Activated CD4-positive, alpha-beta T cell treated with anti-CD3 and anti-CD28 coated beads for 36 hours (primary cell): ENCODE measurements at regions of chr11 and their contacts with region 1.

Region 1: GRCh38 chr11:118791111-118791965 is at the start of gene DDX6:
- DNase-seq: peak; percentile 96
- ATAC-seq: peak; percentile 47
- H3K4me3 Mint-ChIP-seq: peak within 1 kb of the TSS; percentile 87
- H3K27ac Mint-ChIP-seq: peak within 1 kb of the TSS; percentile 93
- H3K4me1 Mint-ChIP-seq: peaks cover 26% of the 10 kb centered on the region
- H3K27me3 Mint-ChIP-seq: no peaks in the 10 kb centered on the region
- total RNA-seq, gene DDX6: 175 to 178 TPM

Region 2: DNA sequence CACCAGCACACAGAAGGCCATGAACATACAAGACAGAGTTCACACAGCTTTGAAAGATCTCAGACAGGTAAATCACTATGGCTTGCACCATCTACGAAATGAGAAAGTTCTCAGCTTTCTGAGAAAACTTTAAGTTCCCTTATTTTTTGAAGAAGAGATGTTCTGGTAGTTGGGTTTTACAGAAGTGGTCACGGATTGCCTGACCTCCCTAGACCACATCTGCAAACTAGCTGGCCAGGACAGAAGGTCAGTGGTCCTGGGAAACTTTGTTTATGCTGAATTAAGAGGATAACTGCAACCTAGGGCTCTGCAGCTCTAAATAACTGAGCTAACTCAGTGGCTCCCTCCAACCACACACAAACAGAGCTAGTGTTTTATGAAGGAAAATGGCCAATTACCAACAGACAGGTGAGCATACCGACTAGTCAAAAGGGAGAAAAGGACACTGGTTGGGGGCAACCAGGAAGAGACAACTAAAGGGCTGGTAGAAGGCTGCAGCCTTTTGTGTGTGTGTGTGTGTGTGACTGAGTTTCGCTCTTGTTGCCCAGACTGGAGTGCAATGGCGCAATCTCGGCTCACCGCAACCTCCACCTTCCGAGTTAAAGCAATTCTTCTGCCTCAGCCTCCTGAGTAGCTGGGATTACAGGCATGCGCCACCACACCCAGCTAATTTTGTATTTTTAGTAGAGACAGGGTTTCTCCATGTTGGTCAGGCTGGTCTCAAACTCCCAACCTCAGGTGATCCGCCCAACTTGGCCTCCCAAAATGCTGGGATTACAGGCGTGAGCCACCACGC is 606.4 kb before region 1 on chr11:
- CTCF ChIA-PET with region 1: no interaction called
- POLR2A ChIA-PET with region 1: no interaction called
- intact Hi-C with region 1: no loop called
- DNase-seq: no peak
- ATAC-seq: no peak
- H3K4me3 Mint-ChIP-seq: no peak overlapping the region
- H3K27ac Mint-ChIP-seq: no peak overlapping the region
- H3K4me1 Mint-ChIP-seq: peaks cover under 1% of the 10 kb centered on the region
- H3K27me3 Mint-ChIP-seq: peaks cover 15% of the 10 kb centered on the region

Region 3: DNA sequence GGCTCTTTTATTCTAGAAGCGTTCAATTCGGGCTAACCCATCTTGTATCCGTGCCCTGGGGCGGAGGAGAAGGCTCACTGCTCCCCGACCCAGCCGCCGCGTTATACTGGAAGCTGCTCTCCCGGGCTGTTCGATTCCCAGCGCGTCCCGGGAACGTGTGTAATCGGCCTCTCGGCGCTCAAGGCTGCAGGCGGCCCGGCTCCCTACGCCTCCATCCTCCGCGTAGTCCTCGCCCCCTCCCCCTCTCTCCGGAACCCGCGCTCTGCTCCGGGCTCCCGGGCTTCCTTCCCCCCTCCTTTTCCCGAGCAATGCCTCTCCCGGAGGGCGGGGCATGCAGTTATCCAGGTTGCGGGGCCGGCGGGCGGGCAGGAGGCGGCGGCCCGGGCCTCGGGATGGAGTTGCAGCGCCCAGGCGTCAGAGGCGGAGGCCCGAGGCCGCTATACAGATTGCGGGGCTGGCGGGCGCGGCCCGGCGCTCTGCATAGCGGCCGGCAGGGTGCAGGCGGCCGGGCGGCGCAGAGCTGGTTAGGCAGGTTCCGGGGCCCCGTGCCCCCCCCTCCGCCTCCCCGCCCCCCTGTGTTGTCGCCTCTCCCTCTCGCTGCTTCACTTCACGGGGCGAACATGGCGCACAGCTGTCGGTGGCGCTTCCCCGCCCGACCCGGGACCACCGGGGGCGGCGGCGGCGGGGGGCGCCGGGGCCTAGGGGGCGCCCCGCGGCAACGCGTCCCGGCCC is 355.3 kb before region 1 on chr11 and contains the start of gene KMT2A:
- CTCF ChIA-PET with region 1: no interaction called
- POLR2A ChIA-PET with region 1: no interaction called
- intact Hi-C with region 1: loop called in 1 of 2 experiments (anchors 5 kb)
- DNase-seq: peak; percentile 96
- ATAC-seq: peak; percentile 41
- H3K4me3 Mint-ChIP-seq: peak within 1 kb of the TSS; percentile 94
- H3K27ac Mint-ChIP-seq: peak within 1 kb of the TSS; percentile 94
- H3K4me1 Mint-ChIP-seq: peaks cover 37% of the 10 kb centered on the region
- H3K27me3 Mint-ChIP-seq: no peaks in the 10 kb centered on the region
- total RNA-seq, gene KMT2A: 64.1 to 67.1 TPM

Region 4: GRCh38 chr11:118845369-118845768 is 54.0 kb after region 1 on chr11:
- CTCF ChIA-PET with region 1: interaction called, 7 read pairs
- POLR2A ChIA-PET with region 1: interaction called, 6 read pairs
- intact Hi-C with region 1: loop called in 1 of 2 experiments (anchors 1 kb)
- DNase-seq: peak; percentile 55
- ATAC-seq: peak; percentile 70
- H3K4me3 Mint-ChIP-seq: peak overlapping the region; percentile 5
- H3K27ac Mint-ChIP-seq: peak overlapping the region; percentile 68
- H3K4me1 Mint-ChIP-seq: peaks cover 47% of the 10 kb centered on the region
- H3K27me3 Mint-ChIP-seq: no peaks in the 10 kb centered on the region

Region 5: GRCh38 chr11:118883368-118884071 is 92.2 kb after region 1 on chr11 and contains the start of gene CXCR5:
- CTCF ChIA-PET with region 1: interaction called, 22 read pairs
- POLR2A ChIA-PET with region 1: interaction called, 62 read pairs
- intact Hi-C with region 1: loop called (anchors 1 to 2 kb)
- DNase-seq: peak; percentile 80
- ATAC-seq: peak; percentile 68
- H3K4me3 Mint-ChIP-seq: peak within 1 kb of the TSS; percentile 75
- H3K27ac Mint-ChIP-seq: peak within 1 kb of the TSS; percentile 90
- H3K4me1 Mint-ChIP-seq: peaks cover 80% of the 10 kb centered on the region
- H3K27me3 Mint-ChIP-seq: no peaks in the 10 kb centered on the region
- total RNA-seq, gene CXCR5: 18.9 to 21.3 TPM

Region 6: GRCh38 chr11:118928108-118928870 is 137.0 kb after region 1 on chr11:
- CTCF ChIA-PET with region 1: interaction called, 9 read pairs
- POLR2A ChIA-PET with region 1: interaction called, 6 read pairs
- intact Hi-C with region 1: loop called (anchors 1 to 2 kb)
- DNase-seq: peak; percentile 95
- ATAC-seq: peak; percentile 51
- H3K4me3 Mint-ChIP-seq: peak overlapping the region; percentile 86
- H3K27ac Mint-ChIP-seq: peak overlapping the region; percentile 97
- H3K4me1 Mint-ChIP-seq: peaks cover 42% of the 10 kb centered on the region
- H3K27me3 Mint-ChIP-seq: no peaks in the 10 kb centered on the region

Region 7: DNA sequence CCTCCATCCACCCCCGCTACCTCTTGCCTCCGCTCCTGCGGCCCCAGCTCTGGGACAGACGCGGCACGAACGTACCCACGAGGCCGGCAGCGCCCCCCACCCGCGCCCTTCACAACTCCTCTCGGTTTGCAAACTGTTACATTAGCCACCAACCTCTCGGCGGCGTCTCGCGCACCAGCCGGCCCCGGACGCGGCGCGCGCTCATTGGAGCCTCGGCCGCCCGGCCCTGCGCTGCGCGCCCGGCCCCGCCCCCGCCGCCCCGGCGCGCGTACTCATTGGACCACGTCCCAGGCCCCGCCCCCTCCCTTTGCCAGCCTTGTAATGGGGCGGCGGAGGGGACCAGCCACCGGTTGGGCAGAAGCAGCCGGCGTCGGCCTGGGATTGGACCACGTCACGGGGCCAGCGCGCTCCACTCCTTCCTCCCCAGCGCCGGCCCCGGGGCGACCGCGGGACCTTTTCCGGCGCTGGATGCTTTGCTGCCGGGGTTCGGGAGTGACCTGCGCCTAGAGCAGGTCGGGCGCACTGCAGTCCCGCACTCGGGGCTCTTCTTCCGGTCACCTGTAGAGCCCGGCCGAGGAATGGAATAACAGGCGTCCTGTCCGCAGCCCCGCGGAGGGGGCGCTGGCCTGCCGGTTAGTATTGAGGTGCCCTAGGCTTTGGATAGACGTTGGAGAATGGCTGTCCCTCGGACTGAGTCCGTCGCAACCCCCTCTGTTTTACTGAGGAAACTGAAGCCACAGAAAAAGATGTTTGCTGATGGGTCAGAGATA is 265.8 kb after region 1 on chr11 and contains the start of gene HYOU1:
- CTCF ChIA-PET with region 1: no interaction called
- POLR2A ChIA-PET with region 1: no interaction called
- intact Hi-C with region 1: loop called in 1 of 2 experiments (anchors 1 kb)
- DNase-seq: peak; percentile 100
- ATAC-seq: peak; percentile 96
- H3K4me3 Mint-ChIP-seq: peak within 1 kb of the TSS; percentile 82
- H3K27ac Mint-ChIP-seq: peak within 1 kb of the TSS; percentile 94
- H3K4me1 Mint-ChIP-seq: peaks cover 34% of the 10 kb centered on the region
- H3K27me3 Mint-ChIP-seq: no peaks in the 10 kb centered on the region
- total RNA-seq, gene HYOU1: 104 to 114 TPM